CD8-positive, alpha-beta memory T cell (primary cell): ENCODE measurements at regions of chr3 and their contacts with region 1.

Region 1: DNA sequence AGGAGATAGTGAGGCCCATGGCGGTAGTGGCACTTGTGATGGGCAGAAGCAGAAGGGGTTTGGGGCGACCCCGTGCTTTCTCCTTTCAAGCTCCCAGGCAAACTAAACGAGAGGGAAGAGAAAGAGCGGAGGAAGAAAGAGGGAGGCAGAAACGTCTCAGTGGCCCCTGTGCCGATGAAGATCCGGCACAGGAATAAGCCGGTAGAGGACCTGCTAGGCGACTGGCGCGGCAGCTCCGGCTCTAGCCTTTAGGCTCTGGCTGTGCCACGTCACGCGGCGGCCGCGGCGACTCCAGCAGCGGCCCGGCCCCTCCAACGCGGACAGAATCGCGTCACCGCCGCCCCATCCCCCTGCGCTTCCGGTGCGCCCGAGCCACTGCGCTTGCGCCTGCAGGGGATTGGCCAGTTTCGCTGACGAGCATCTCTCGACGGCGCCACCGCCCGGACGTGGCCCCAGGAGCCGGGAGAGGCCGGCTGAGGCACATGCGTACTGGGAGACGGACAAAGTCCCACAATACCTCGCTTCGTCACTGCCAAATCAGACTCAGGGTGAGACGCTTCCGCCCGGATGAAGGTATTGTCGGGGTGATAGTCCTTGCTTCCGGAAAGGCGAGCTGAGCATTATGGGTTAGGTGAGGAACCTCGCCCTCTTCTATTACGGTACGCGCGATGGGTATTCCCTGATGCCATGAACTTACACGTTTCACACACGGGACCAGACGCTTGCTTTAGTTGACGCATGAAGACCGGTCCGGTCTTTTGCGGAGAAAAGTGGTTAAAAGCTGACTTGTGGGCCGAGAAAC is at the start of gene ARF4:
- DNase-seq: peak; percentile 99 to 100 (median 100)
- H3K4me3 ChIP-seq: peak within 1 kb of the TSS; percentile 97
- H3K4me3 Mint-ChIP-seq: peak within 1 kb of the TSS; percentile 87 to 100 (median 92)
- H3K27ac ChIP-seq: peak within 1 kb of the TSS; percentile 98
- H3K27ac Mint-ChIP-seq: peak within 1 kb of the TSS; percentile 97 to 100 (median 100)
- H3K4me1 ChIP-seq: peaks cover 29% of the 10 kb centered on the region
- H3K4me1 Mint-ChIP-seq: peaks cover 58 to 65% (median 63%) of the 10 kb centered on the region in 3 donors
- H3K27me3 ChIP-seq: no peaks in the 10 kb centered on the region
- H3K27me3 Mint-ChIP-seq: peaks cover 0 to 1% of the 10 kb centered on the region in 2 donors
- total RNA-seq, gene ARF4: 74.4 to 78.5 TPM

Region 2: GRCh38 chr3:57279685-57280084 is 317.6 kb before region 1 on chr3:
- CTCF ChIA-PET with region 1: no interaction called
- POLR2A ChIA-PET with region 1: no interaction called
- DNase-seq: no peak
- H3K4me3 ChIP-seq: no peak overlapping the region
- H3K4me3 Mint-ChIP-seq: no peak overlapping the region
- H3K27ac ChIP-seq: no peak overlapping the region
- H3K27ac Mint-ChIP-seq: peak overlapping the region in 1 of 8 donors; percentile 41
- H3K4me1 ChIP-seq: no peaks in the 10 kb centered on the region
- H3K4me1 Mint-ChIP-seq: no peaks in the 10 kb centered on the region
- H3K27me3 ChIP-seq: no peaks in the 10 kb centered on the region
- H3K27me3 Mint-ChIP-seq: no peaks in the 10 kb centered on the region

Region 3: GRCh38 chr3:57555738-57556458 is 41.4 kb before region 1 on chr3 and contains the start of gene PDE12:
- CTCF ChIA-PET with region 1: interaction called, 5 read pairs
- POLR2A ChIA-PET with region 1: interaction called, 68 read pairs
- DNase-seq: peak; percentile 73 to 87 (median 80)
- H3K4me3 ChIP-seq: peak within 1 kb of the TSS; percentile 55
- H3K4me3 Mint-ChIP-seq: peak within 1 kb of the TSS; percentile 85 to 95 (median 88)
- H3K27ac ChIP-seq: peak within 1 kb of the TSS; percentile 88
- H3K27ac Mint-ChIP-seq: peak within 1 kb of the TSS; percentile 93 to 100 (median 99)
- H3K4me1 ChIP-seq: peaks cover 27% of the 10 kb centered on the region
- H3K4me1 Mint-ChIP-seq: peaks cover 40 to 51% (median 47%) of the 10 kb centered on the region in 3 donors
- H3K27me3 ChIP-seq: no peaks in the 10 kb centered on the region
- H3K27me3 Mint-ChIP-seq: no peaks in the 10 kb centered on the region
- total RNA-seq, gene PDE12: 31.6 to 33.3 TPM

Region 4: DNA sequence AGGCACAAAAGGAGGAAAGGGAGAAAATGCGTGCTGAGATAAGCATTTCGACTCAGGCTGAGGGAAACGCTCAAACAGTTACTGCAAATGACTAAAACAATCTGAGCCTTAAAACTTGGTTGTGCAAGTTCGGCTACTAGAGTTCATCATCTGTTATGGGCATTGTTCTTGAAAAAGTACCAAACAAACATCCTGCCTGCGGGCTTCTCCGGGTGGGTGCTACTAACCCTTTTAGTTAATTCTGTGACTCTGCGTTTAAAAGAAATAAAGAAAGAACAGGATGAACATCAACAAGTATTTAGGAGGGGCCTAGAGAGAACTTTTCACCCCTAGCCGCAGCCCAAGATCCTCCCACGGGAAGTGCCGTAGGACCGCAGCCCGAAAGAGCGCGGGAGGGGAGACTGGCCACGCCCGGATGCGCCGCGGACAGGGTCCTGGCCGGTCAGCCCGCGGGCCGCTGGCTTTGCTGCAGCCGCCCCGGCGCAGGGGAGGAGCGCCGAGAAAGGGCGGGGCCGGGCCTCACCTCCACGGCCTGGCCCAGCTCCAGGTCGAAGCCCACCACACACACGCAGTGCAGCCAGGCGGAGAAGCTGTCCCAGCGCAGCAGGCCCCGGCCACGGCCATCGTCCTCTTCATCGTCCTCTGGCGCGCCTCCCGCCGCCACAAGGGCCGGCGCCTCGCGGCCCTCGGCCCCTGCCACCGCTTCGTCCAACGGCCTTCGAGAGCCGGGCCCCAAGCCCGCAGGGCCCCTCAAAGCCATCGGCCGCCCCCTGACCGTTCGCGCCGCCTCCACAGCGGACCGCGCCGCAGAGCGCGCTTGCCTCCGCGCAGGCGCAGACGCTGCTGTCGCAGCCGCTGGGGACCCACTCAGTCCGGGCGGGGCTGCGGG is 95.2 kb after region 1 on chr3 and contains the start of gene DENND6A:
- CTCF ChIA-PET with region 1: no interaction called
- POLR2A ChIA-PET with region 1: interaction called, 17 read pairs
- DNase-seq: peak; percentile 95 to 97 (median 96)
- H3K4me3 ChIP-seq: peak within 1 kb of the TSS; percentile 69
- H3K4me3 Mint-ChIP-seq: peak within 1 kb of the TSS; percentile 84 to 96 (median 90)
- H3K27ac ChIP-seq: peak within 1 kb of the TSS; percentile 95
- H3K27ac Mint-ChIP-seq: peak within 1 kb of the TSS; percentile 86 to 97 (median 92)
- H3K4me1 ChIP-seq: peaks cover 37% of the 10 kb centered on the region
- H3K4me1 Mint-ChIP-seq: peaks cover 29 to 43% (median 36%) of the 10 kb centered on the region in 3 donors
- H3K27me3 ChIP-seq: no peaks in the 10 kb centered on the region
- H3K27me3 Mint-ChIP-seq: no peaks in the 10 kb centered on the region
- total RNA-seq, gene DENND6A: 12.5 to 15.5 TPM

Region 5: DNA sequence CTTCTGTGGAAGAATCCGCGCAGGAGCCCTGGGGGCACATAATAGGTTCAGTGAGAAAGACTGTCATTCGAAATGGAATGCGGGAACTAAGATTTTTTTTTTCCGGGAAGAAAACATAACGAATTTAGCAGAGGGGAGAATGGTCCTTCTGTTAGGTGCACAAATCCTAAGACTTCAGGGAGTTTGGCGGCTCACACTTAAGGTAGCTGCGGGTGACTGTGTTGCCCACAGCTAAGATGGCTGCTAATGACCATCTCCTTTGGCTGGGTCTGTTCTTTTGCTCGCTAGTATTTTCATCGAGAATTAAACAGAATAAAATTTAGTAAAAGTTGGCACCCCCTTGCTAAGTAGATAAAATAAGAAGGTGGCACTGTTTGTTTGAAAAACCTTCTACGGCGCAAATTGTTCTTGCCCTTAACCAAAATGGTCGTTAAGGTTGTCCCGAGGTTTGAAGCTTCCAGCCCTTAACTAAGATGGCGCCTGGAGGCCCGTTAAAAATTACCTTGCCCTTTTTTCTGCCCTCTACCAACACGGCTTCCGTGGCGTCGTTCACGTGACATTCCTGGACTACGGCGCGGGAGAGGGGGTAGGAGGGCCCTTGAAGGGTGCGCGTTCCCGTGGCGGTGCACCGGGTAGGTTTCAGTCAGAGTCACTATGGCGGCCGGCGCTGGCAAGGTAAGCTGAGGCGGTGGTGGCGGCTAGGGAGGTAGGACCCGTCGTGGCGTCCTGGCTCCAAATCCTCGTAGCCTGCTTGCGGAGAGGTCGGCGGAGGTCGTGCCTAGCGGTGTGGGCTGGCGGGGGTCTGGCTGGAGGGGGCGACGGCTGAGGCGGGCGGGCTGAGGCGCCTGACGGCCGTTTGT is 158.6 kb after region 1 on chr3 and contains the start of gene SLMAP:
- CTCF ChIA-PET with region 1: interaction called, 3 read pairs
- POLR2A ChIA-PET with region 1: interaction called, 21 read pairs
- DNase-seq: peak; percentile 92 to 97 (median 94)
- H3K4me3 ChIP-seq: peak within 1 kb of the TSS; percentile 73
- H3K4me3 Mint-ChIP-seq: peak within 1 kb of the TSS; percentile 93 to 98 (median 96)
- H3K27ac ChIP-seq: peak within 1 kb of the TSS; percentile 66
- H3K27ac Mint-ChIP-seq: peak within 1 kb of the TSS; percentile 68 to 98 (median 95)
- H3K4me1 ChIP-seq: peaks cover 37% of the 10 kb centered on the region
- H3K4me1 Mint-ChIP-seq: peaks cover 38 to 47% (median 41%) of the 10 kb centered on the region in 3 donors
- H3K27me3 ChIP-seq: no peaks in the 10 kb centered on the region
- H3K27me3 Mint-ChIP-seq: no peaks in the 10 kb centered on the region
- total RNA-seq, gene SLMAP: 55.8 to 57.8 TPM